ENCODE measurements at regions of chr1 and their contacts with region 1.

Region 1: DNA sequence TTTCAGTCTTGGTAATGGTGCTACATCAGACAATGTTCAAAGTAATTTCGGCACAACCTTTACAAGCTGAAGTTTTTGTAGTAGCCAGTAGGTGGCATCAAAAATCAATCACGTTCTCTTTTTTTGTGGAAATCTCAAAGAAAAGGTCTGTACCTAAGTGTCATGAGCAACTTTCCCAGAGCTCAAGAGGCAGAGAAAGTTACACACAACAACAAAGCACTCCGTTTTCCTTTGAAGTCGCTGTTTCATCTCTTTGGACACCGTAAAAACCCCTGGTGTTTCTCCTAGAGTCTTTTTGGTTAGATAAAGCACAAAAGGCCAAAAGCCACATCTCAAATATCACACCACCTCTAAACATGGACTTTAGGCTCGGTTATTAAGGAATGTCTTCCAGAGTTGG is 131.6 kb downstream of the LHX8 start:
- DNase-seq: no peak
- ATAC-seq: no peak
- H3K4me3 Mint-ChIP-seq: no peak overlapping the region
- H3K27ac Mint-ChIP-seq: no peak overlapping the region
- H3K4me1 Mint-ChIP-seq: no peaks in the 10 kb centered on the region
- H3K27me3 Mint-ChIP-seq: no peaks in the 10 kb centered on the region
- CTCF ChIP-seq: peak; percentile 49

Region 2: DNA sequence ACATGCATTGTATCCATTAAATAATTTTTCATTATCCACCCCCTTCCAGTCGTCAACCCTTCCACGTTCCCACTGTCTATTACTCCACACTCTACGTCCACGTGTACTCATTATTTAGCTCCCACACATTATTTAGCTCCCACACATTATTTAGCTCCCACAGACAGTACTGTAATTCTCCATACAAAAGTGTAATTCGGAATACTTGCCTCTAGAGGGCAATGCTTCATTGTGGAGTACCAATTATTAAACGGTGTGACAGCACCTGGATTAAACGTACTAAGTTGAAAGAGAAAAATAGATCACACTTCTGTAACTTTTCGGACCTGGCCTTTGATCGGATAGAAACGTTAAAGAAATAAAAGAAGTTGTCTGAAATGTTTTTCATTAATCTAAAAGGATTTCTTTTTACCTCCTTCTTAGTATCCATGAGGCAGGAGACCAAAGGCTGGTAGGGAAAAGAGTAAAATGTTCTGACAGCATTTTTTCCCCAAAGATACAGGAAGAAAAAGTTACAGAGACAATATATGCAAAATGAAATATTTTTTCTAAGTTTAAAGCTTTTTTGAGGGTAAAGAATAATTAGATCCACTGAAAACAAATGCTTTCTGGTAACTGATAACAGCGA is 32.4 kb before region 1 on chr1:
- CTCF ChIA-PET with region 1: interaction called, 15 read pairs
- POLR2A ChIA-PET with region 1: no interaction called
- intact Hi-C with region 1: no loop called
- DNase-seq: no peak
- ATAC-seq: peak; percentile 72
- H3K4me3 Mint-ChIP-seq: no peak overlapping the region
- H3K27ac Mint-ChIP-seq: no peak overlapping the region
- H3K4me1 Mint-ChIP-seq: no peaks in the 10 kb centered on the region
- H3K27me3 Mint-ChIP-seq: no peaks in the 10 kb centered on the region
- CTCF ChIP-seq: peak; percentile 57

Region 3: GRCh38 chr1:75276385-75276784 is 10.6 kb after region 1 on chr1:
- CTCF ChIA-PET with region 1: interaction called, 17 read pairs
- POLR2A ChIA-PET with region 1: no interaction called
- intact Hi-C with region 1: no loop called
- DNase-seq: no peak
- ATAC-seq: no peak
- H3K4me3 Mint-ChIP-seq: no peak overlapping the region
- H3K27ac Mint-ChIP-seq: no peak overlapping the region
- H3K4me1 Mint-ChIP-seq: no peaks in the 10 kb centered on the region
- H3K27me3 Mint-ChIP-seq: no peaks in the 10 kb centered on the region
- CTCF ChIP-seq: no peak

Region 4: DNA sequence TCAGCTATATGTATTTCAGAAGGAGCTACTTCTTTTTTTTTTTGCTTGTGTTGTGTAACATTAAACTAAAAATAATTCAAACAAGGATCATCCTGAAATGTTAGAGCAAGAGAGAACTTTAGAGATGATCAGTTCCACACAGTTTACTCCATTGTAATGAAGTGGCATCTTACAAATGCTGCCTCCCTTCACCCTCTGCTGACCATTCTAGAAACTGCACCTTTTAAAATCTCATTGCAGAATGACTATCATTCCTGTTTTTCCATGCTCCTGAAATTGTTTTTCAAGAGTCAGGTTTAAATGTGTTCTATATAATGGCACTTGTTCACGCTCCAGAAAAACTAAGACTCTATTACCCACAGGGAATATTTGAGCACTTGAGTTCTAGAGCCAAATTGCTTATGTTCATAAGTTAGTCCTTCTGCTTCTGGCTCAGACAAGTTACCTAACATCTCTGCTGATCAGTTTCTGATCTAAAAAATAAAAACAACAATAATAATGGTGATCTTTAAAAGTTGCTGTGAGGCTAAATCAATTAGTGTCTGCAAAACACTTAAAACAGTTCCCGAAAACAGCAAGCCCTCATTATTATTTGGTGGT is 366.7 kb after region 1 on chr1:
- CTCF ChIA-PET with region 1: interaction called, 8 read pairs
- POLR2A ChIA-PET with region 1: no interaction called
- intact Hi-C with region 1: loop called (anchors 10 kb)
- DNase-seq: no peak
- ATAC-seq: no peak
- H3K4me3 Mint-ChIP-seq: no peak overlapping the region
- H3K27ac Mint-ChIP-seq: no peak overlapping the region
- H3K4me1 Mint-ChIP-seq: no peaks in the 10 kb centered on the region
- H3K27me3 Mint-ChIP-seq: peaks cover 15% of the 10 kb centered on the region
- CTCF ChIP-seq: peak; percentile 80